ENCODE measurements at regions of chr9 and their contacts with region 1.

Region 1: DNA sequence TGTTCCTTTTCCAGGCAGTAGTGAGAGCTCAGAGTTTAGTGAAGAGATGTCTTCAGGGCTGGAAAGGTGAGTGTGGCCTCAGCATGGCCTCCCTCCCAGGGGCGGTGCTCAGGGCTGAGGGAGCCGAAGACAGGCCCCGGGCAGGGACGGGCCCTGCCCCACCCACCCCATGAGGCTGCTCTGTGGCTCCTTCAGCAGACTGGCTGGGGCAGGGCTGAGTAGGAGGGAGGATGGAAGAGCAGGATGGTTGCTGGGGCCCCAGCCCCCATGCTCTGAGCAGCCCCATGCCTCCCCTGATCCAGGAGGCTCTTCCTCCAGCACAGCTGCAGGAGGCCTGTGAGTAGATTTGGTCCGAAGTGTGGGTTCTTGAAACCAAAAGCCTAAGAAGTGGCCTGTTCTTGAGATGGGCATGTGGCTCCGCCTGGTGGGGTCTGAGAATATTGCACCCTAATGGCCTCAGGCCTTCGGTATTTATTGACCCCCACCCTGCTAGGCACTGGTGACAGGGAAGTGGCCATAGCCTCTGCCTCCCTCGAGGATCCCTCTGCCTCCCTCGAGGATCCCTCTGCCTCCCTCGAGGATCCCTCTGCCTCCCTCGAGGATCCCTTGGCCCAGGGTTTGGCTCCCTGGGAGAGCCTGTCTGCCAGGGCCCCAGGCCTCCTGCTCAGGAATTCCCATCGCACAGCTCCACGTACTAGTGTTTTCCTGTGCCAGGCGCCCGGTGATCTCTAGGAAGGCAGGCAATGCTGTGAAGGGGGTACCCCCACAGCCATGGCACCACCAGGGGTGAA is 65.4 kb upstream of the GARNL3 start:
- ATAC-seq: peak; percentile 71 to 90 (median 83)
- H3K4me3 ChIP-seq: no peak overlapping the region
- H3K27ac ChIP-seq: no peak overlapping the region
- H3K4me1 ChIP-seq: no peaks in the 10 kb centered on the region

Region 2: GRCh38 chr9:126965541-126966428 is 233.4 kb before region 1 on chr9:
- in situ Hi-C with region 1: loop called in 2 of 9 experiments (anchors 10 to 25 kb)
- ATAC-seq: peak in 5 of 8 experiments; percentile 43 to 96 (median 83)
- H3K4me3 ChIP-seq: no peak overlapping the region
- H3K27ac ChIP-seq: no peak overlapping the region
- H3K4me1 ChIP-seq: no peaks in the 10 kb centered on the region

Region 3: GRCh38 chr9:127130661-127131538 is 68.3 kb before region 1 on chr9:
- in situ Hi-C with region 1: loop called in 1 of 9 experiments (anchors 10 kb)
- ATAC-seq: peak; percentile 70 to 97 (median 76)
- H3K4me3 ChIP-seq: no peak overlapping the region
- H3K27ac ChIP-seq: no peak overlapping the region
- H3K4me1 ChIP-seq: peaks cover 22 to 28% of the 10 kb centered on the region in 2 donors

Region 4: GRCh38 chr9:127451725-127452480 is 252.7 kb after region 1 on chr9:
- in situ Hi-C with region 1: no loop called
- ATAC-seq: peak; percentile 24 to 52 (median 44)
- H3K4me3 ChIP-seq: peak overlapping the region; percentile 61 to 91 (median 66)
- H3K27ac ChIP-seq: peak overlapping the region; percentile 63 to 74
- H3K4me1 ChIP-seq: peaks cover 13 to 16% of the 10 kb centered on the region in 2 donors